ENCODE measurements at regions of chr5 and their contacts with region 1.

Region 1: DNA sequence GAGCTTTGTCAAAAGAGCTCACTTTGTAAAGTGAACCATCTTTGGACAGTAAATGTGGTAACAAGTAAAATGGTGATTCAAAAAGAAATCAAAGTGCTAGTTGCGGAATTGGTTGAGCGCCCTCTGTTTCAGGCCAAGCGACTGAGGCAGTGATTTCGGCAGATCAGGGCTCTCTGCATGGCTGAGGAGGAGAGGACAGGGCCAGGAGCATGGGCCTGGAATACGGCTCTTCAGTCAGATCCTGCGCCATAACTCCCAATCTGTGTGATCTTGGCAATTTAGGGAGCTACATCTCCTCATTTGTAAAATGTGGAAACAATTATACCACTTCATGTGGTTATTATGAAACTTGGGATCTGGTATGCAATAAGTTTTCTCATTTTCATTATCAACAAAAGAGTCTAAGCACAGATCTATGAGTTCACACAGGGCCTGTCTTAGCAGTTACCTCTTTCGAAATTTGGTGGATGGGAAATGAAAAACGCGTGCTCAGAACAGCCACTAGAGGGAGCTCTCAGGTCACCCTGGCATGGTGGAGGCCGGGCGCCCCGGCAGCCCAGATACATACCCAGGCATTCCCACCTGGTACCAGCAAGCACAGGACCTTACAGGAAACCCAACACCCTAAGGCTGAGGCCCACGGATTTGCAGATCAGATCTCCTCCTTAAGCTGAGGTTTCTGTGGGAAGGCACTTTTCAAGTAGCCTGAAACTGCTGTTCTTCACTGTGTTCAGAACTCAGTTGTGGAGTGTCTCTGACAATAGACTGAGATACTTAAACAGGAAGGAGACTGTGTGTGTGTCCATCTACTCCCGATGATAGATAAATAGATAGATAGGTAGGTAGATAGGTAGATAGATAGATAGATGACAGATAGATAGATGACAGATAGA is 303.7 kb downstream of the RAB3C start:
- H3K4me3 ChIP-seq: no peak overlapping the region
- H3K27ac ChIP-seq: no peak overlapping the region
- H3K4me1 ChIP-seq: no peaks in the 10 kb centered on the region; the same call in 1 of the 2 replicates
- CTCF ChIP-seq: peak; percentile 59; the same call in 1 of the 2 replicates

Region 2: DNA sequence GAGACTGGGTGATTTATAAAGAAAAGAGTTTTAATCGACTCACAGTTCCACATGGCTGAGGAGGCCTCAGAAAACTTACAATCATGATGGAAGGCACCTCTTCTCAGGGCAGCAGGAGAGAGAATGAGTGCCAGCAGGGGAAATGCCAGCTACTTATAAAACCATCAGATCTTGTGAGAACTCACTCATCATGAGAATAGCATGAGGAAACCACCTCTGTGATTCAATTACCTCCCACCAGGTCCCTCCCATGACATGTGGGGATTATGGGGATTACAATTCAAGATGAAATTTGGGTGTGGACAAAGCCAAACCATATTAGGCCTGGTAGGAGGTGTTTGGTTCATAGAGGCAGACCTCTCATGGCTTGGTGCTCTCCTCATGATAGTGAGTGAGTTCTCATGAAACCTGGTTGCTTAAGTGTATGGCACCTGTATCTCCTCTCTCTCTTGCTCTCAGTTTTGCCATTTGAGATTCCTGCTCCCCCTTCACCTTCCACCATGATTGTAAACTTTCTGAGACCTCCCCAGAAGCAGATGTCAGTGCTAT is 355.5 kb before region 1 on chr5:
- CTCF ChIA-PET with region 1: no interaction called
- POLR2A ChIA-PET with region 1: no interaction called
- H3K4me3 ChIP-seq: no peak overlapping the region
- H3K27ac ChIP-seq: no peak overlapping the region
- H3K4me1 ChIP-seq: no peaks in the 10 kb centered on the region
- CTCF ChIP-seq: no peak

Region 3: DNA sequence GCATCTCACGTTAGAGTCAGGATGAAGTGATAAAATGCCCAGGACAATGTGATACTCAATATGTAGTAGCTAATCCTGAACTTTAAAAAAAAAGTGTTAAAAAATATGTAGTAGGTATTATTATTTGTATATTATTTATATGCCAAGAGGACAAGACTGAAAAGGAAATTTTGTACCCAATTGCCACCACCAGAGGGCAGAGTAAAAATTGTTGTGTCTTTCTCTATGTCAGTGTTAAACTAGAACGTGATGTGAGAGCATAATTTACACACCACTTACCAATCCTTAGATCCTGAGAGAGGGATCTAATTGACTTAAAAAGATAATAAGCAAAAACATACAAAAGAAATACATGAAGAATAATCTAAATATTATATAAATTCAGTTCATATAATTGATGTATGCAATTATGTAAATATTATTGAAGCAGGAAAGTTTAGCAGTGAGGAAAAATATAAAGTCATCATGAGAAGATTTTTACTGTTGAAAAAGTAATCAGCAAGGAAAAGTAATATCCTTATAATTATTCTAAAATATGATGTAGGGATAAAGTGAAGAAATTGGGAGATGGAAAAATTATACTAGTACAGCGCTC is 14.8 kb before region 1 on chr5:
- CTCF ChIA-PET with region 1: interaction called, 28 read pairs
- POLR2A ChIA-PET with region 1: no interaction called
- H3K4me3 ChIP-seq: no peak overlapping the region
- H3K27ac ChIP-seq: no peak overlapping the region
- H3K4me1 ChIP-seq: no peaks in the 10 kb centered on the region
- CTCF ChIP-seq: no peak

Region 4: DNA sequence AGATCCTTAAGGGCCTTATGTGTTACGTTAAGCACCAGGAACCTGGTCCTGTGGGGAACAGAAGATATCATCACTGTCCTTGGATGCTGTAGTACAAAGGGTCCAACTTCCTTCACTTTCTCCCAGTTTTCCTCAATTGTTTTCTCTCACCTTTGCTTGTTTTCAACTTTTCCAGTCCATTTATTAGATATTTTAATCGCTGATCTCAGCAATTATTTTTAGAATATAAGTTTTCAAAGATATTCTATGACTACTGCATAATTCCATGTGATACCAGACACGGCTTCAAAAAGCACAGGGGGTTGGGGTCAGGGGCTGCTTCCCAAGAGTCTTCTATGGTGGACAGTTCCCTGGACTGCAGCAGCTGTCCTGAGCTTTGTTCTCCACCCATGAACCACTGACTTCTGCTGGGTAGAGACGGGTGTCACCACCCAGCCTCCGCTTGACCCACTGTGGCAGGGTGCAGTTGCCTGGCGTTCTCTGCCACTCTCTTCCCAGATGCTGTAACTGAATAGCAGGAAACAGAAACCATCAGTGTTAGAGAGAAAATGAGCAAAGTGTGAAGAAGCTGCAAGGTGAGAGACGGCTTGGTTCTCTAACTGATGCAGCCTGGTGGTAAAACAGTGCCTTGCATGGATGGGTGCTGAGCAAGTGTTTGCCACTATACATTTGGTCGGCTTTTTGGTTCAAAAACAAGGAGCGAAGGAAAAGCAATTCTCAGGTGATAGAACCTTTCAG is 79.3 kb after region 1 on chr5:
- CTCF ChIA-PET with region 1: interaction called, 8 read pairs
- POLR2A ChIA-PET with region 1: interaction called, 14 read pairs
- H3K4me3 ChIP-seq: no peak overlapping the region
- H3K27ac ChIP-seq: no peak overlapping the region
- H3K4me1 ChIP-seq: peaks cover 3% of the 10 kb centered on the region; the same call in 1 of the 2 replicates
- CTCF ChIP-seq: no peak

Region 5: GRCh38 chr5:59007460-59008063 is 121.0 kb after region 1 on chr5:
- CTCF ChIA-PET with region 1: interaction called, 38 read pairs
- POLR2A ChIA-PET with region 1: no interaction called
- H3K4me3 ChIP-seq: no peak overlapping the region
- H3K27ac ChIP-seq: no peak overlapping the region
- H3K4me1 ChIP-seq: no peaks in the 10 kb centered on the region
- CTCF ChIP-seq: no peak

Region 6: GRCh38 chr5:59819806-59820205 is 933.2 kb after region 1 on chr5:
- CTCF ChIA-PET with region 1: no interaction called
- POLR2A ChIA-PET with region 1: no interaction called
- H3K4me3 ChIP-seq: no peak overlapping the region
- H3K27ac ChIP-seq: no peak overlapping the region
- H3K4me1 ChIP-seq: no peaks in the 10 kb centered on the region
- CTCF ChIP-seq: no peak